ENCODE measurements at regions of chr9 and their contacts with region 1.

Region 1: DNA sequence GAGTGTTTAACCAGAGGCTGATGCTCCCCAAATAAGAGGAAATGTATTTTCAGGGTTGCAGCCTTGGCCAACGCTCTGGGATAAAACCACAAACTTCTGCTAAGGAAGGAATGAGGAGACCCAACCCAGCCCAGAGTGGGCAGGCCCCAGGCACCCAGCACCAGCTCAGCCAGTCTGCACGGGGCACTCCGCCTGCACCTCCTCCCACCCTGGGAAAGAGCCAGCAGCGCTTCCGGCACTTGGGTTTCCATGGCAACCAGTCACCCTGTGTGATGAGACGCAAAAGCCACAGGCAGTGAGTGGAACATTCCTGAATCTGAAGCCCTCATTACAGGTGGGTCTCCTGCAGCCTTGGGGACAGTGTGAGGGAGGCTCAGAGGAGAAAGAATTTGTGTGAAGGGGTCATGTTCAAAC is 85.2 kb upstream of the ZBTB43 start:
- DNase-seq: peak; percentile 44 to 58
- ATAC-seq: peak in 1 of 2 donors; percentile 7
- H3K4me3 ChIP-seq: no peak overlapping the region
- H3K27ac ChIP-seq: no peak overlapping the region
- H3K4me1 ChIP-seq: no peaks in the 10 kb centered on the region
- H3K27me3 ChIP-seq: peaks cover 30 to 44% (median 32%) of the 10 kb centered on the region in 3 donors
- CTCF ChIP-seq: no peak
- POLR2A ChIP-seq: peak in 1 of 2 donors; percentile 22

Region 2: DNA sequence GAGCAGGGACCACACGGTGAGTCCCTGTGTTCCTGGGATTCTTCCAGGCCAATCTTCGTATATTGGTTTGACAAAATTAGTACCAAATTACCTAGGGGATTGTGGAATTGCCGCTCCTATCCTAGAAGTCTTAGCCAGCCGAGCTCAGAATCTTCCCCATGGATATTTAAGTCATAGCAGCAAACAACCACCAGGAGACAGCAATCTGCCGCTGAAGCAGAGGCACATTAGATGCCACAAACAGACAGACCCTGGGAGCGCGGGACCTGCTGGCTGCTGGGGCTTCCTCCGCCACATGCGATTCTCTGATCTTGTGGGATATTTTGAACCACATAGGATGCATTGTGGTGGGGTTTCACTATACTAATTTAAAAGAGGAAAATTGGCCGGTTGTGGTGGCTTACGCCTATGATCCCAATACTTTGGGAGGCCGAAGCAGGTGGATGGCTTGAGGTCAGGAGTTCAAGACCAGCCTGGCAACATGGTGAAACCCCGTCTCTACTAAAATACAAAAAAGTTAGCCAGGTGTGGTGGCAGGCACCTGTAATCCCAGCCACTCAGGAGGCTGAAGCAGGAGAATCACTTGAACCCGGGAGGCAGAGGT is 53.5 kb after region 1 on chr9:
- in situ Hi-C with region 1: loop called in 2 of 4 experiments (anchors 5 to 10 kb)
- intact Hi-C with region 1: no loop called
- DNase-seq: no peak
- ATAC-seq: no peak
- H3K4me3 ChIP-seq: no peak overlapping the region
- H3K27ac ChIP-seq: no peak overlapping the region
- H3K4me1 ChIP-seq: no peaks in the 10 kb centered on the region
- H3K27me3 ChIP-seq: peaks cover 10 to 14% (median 12%) of the 10 kb centered on the region in 3 donors
- CTCF ChIP-seq: peak in 2 of 5 experiments; percentile 30 to 38
- POLR2A ChIP-seq: no peak

Measured in gastrocnemius medialis (tissue), 4 donors.